ENCODE measurements at regions of chr14 and their contacts with region 1.

Region 1: DNA sequence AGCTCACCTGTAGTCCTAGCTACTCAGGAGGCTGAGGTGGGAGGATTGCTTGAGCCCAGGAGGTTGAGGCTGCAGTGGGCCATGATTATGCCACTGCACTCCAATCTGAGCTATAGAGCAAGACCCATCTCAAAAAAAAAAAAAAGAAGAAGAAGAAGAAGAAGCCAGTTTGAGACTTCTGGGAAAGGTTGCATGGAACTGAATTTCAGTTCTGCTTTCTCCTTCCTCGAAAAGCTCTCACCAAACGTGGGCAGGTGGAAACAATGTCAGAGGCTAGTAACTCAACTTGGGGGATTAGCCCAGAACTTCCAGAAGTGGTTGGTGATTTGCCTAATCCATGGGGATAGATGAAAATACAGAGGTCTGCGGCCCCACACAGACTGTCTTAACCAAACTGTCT is 18.7 kb downstream of the FLVCR2 start:
- DNase-seq: no peak
- ATAC-seq: no peak
- H3K4me3 ChIP-seq: no peak overlapping the region
- H3K27ac ChIP-seq: no peak overlapping the region
- H3K4me1 ChIP-seq: no peaks in the 10 kb centered on the region
- H3K27me3 ChIP-seq: peaks cover 9% of the 10 kb centered on the region
- CTCF ChIP-seq: no peak
- POLR2A ChIP-seq: no peak
- RAD21 ChIP-seq: no peak

Region 2: GRCh38 chr14:74684434-74684833 is 912.7 kb before region 1 on chr14:
- CTCF ChIA-PET with region 1: no interaction called
- POLR2A ChIA-PET with region 1: no interaction called
- dilution Hi-C with region 1: no loop called
- in situ Hi-C with region 1: no loop called
- intact Hi-C with region 1: no loop called
- DNase-seq: no peak
- ATAC-seq: no peak
- H3K4me3 ChIP-seq: no peak overlapping the region
- H3K27ac ChIP-seq: no peak overlapping the region
- H3K4me1 ChIP-seq: no peaks in the 10 kb centered on the region
- H3K27me3 ChIP-seq: no peaks in the 10 kb centered on the region
- CTCF ChIP-seq: no peak
- POLR2A ChIP-seq: no peak
- RAD21 ChIP-seq: no peak

Region 3: DNA sequence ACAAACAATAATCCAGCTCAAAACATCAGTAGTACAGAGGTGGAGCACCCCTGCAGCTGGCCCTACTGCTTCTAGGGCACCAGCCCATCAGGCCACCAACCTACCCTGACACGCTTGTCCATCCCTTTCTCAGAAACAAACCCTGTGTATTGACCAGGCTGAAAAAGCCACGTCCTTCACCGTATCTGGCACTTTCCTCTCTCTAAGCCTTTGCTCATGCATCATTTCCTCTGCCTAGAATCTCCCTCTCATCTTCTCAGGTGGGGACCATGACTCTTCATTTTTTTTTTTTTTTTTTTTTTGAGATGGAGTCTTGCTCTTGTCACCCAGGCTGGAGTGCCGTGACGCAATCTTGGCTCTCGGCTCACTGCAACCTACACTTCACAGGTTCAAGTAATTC is 44.0 kb before region 1 on chr14:
- CTCF ChIA-PET with region 1: no interaction called
- POLR2A ChIA-PET with region 1: no interaction called
- dilution Hi-C with region 1: no loop called
- in situ Hi-C with region 1: no loop called
- intact Hi-C with region 1: loop called (anchors 1 kb)
- DNase-seq: no peak
- ATAC-seq: no peak
- H3K4me3 ChIP-seq: no peak overlapping the region
- H3K27ac ChIP-seq: no peak overlapping the region
- H3K4me1 ChIP-seq: peaks cover 9% of the 10 kb centered on the region
- H3K27me3 ChIP-seq: peaks cover 15% of the 10 kb centered on the region
- CTCF ChIP-seq: no peak
- POLR2A ChIP-seq: no peak
- RAD21 ChIP-seq: no peak

Region 4: DNA sequence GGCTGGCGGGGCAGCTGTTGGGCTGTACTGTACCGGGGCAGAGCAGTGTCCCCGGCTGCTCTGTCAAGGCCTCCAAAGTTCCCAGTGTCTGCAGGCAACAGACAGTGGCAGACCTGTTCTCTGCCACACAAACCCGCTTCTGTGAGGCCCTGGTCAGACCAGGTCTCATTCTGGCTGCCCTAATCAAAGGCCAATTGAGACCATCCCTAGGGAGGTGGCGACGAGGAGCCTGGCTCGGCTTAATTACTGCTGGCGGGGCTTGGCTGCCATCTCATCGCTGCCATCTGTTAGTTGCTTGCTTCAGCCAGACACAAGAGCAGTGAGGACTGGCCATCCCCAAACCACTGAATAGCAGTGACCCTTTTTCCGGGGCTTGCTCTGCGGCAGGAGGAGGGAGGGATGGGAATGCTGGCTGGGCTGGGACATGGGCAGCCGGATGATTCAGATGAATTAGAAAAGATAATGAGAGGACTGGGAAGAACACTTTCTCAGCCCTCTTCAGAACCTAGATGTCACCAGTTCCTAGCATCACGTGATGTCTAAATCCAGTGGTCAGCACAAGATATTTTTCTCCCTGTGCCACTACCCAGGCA is 39.0 kb after region 1 on chr14:
- CTCF ChIA-PET with region 1: interaction called, 3 read pairs
- POLR2A ChIA-PET with region 1: no interaction called
- dilution Hi-C with region 1: no loop called
- in situ Hi-C with region 1: no loop called
- intact Hi-C with region 1: loop called (anchors 5 kb)
- DNase-seq: peak; percentile 32
- ATAC-seq: peak; percentile 87
- H3K4me3 ChIP-seq: no peak overlapping the region
- H3K27ac ChIP-seq: no peak overlapping the region
- H3K4me1 ChIP-seq: peaks cover 2% of the 10 kb centered on the region; the same call in 1 of the 2 replicates
- H3K27me3 ChIP-seq: peaks cover 5% of the 10 kb centered on the region
- CTCF ChIP-seq: no peak
- POLR2A ChIP-seq: no peak
- RAD21 ChIP-seq: no peak

Measured in IMR-90 (cell line).